HepG2 (cell line): ENCODE measurements at regions of chr2 and their contacts with region 1.

Region 1: GRCh38 chr2:88627056-88627855 is at the start of gene EIF2AK3:
- DNase-seq: peak; percentile 100
- ATAC-seq: peak; percentile 94
- H3K4me3 ChIP-seq: peak within 1 kb of the TSS; percentile 92 to 98 (median 93)
- H3K27ac ChIP-seq: peak within 1 kb of the TSS; percentile 92
- H3K4me1 ChIP-seq: peaks cover 48% of the 10 kb centered on the region
- H3K27me3 ChIP-seq: no peaks in the 10 kb centered on the region; a peak in 1 of 5 replicates
- CTCF ChIP-seq: no peak
- EP300 ChIP-seq: 0 out of 4 replicates have a peak, but pooled peaks of 1 of the 2 experiments have one; percentile 23
- POLR2A ChIP-seq: peak; percentile 79 to 97
- RAD21 ChIP-seq: peak; percentile 57
- total RNA-seq, gene EIF2AK3: 19.3 and 30.6 TPM in 2 replicates

Region 2: DNA sequence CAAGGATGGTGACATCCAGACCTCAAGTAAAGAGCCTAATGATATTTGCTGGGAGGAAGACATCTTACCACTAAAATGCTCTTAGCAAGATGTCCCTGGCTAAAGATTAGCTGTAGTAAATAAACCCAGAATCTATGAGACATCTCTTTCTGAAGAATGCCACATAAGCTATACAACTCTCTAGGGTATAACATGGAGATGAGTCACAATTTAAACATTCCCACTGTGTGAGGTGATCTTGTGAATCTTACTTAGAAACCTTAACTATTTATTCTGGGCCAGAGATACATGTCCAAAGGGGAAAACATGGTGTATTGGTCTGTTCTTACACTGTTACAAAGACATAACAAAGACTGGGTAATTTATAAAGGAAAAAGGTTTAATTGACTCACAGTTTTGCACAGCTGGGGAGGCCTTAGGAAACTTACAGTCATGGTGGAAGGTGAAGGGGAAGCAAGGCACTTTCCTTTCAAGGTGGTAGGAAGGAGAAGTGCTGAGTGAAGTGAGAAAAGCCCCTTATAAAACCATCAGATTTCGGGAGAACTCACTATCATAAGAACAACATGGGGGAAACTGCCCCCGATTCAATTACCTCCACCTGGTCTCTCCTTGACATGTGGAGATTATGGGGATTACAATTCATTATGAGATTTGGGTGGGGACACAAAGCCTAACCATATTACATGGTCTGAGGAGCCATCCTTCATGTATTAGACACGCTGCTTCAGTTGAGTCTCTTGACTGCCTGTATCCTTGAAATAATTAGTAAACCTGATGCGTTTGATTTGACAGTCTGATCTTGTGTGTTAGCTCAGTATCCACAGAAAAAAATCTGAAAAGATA is 588.8 kb before region 1 on chr2:
- CTCF ChIA-PET with region 1: no interaction called
- POLR2A ChIA-PET with region 1: no interaction called
- in situ Hi-C with region 1: no loop called
- intact Hi-C with region 1: no loop called
- DNase-seq: peak; percentile 74
- ATAC-seq: peak; percentile 83
- H3K4me3 ChIP-seq: no peak overlapping the region
- H3K27ac ChIP-seq: no peak overlapping the region
- H3K4me1 ChIP-seq: peaks cover 17% of the 10 kb centered on the region
- H3K27me3 ChIP-seq: no peaks in the 10 kb centered on the region
- CTCF ChIP-seq: no peak
- EP300 ChIP-seq: peak in 1 of 2 experiments; percentile 62; a peak in 2 of 4 replicates
- POLR2A ChIP-seq: no peak
- RAD21 ChIP-seq: no peak

Region 3: DNA sequence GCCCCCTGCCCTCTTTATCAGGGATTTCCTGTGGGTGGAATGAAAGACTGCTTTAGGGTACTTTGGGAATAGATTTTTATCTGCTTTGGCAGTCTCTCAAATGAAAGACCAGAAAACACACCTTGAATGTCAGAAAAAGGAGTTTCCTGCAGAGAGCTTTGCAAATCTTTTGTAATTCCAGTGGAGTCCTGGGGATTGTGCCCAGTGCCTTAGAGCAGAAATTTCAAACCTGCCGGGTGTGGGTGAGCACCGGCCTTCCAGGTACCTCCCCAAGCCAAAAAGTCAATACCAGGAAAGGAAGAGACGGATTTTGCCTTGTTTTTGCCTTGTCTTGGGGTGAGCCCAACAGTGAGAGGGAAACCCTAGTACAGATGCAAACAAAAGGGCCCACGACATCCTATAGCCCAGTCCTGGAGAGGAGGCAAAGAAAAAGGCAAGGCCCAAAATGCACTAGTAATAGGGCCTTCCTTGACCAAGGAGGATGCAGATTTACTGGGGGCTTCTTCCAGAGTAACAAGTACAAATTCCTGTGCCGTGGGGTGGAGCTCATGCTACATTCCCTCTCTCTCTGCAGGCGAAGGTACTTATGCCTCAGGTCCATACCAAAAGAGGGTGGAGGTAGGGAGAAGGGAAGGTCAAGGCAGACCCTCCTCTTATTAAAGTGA is 211.1 kb before region 1 on chr2:
- CTCF ChIA-PET with region 1: no interaction called
- POLR2A ChIA-PET with region 1: no interaction called
- in situ Hi-C with region 1: no loop called
- intact Hi-C with region 1: no loop called
- DNase-seq: no peak
- ATAC-seq: no peak
- H3K4me3 ChIP-seq: no peak overlapping the region
- H3K27ac ChIP-seq: no peak overlapping the region
- H3K4me1 ChIP-seq: no peaks in the 10 kb centered on the region
- H3K27me3 ChIP-seq: peaks cover 3 to 26% of the 10 kb centered on the region in 2 experiments; a peak in 3 of 5 replicates
- CTCF ChIP-seq: no peak
- EP300 ChIP-seq: no peak
- POLR2A ChIP-seq: no peak
- RAD21 ChIP-seq: no peak

Region 4: DNA sequence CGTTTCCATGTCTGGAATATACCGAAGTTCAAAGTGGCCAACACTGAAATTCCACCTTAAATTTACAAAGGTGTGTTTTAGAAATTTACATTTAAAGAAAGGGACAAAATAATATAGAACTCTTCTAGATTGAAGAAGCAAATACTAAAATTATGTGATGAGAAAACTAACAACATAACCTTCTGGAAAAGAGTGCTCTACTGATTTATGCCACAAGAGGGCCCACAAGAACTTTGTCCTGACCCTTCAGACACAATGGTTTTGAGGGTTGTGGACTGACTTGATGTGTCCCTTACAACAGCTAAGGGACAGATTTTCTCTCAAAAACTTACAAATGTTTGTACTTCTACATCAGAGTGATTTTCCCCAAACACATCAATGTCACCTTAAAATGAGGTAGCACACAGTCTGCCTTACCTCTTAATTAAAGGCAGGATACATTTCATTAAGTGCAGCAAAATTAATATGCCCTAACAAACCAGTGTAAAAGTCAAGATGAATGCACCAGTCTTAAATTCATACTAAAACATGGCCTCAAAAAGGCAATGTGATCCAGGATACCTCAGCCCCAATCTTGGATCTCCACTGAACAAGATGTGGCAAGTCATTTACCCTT is 36.1 kb before region 1 on chr2:
- CTCF ChIA-PET with region 1: no interaction called
- POLR2A ChIA-PET with region 1: interaction called, 5 read pairs
- in situ Hi-C with region 1: no loop called
- intact Hi-C with region 1: loop called (anchors 2 kb)
- DNase-seq: peak; percentile 65
- ATAC-seq: peak; percentile 96
- H3K4me3 ChIP-seq: no peak overlapping the region
- H3K27ac ChIP-seq: no peak overlapping the region
- H3K4me1 ChIP-seq: no peaks in the 10 kb centered on the region
- H3K27me3 ChIP-seq: no peaks in the 10 kb centered on the region
- CTCF ChIP-seq: peak; percentile 83
- EP300 ChIP-seq: no peak
- POLR2A ChIP-seq: no peak
- RAD21 ChIP-seq: peak; percentile 60

Region 5: DNA sequence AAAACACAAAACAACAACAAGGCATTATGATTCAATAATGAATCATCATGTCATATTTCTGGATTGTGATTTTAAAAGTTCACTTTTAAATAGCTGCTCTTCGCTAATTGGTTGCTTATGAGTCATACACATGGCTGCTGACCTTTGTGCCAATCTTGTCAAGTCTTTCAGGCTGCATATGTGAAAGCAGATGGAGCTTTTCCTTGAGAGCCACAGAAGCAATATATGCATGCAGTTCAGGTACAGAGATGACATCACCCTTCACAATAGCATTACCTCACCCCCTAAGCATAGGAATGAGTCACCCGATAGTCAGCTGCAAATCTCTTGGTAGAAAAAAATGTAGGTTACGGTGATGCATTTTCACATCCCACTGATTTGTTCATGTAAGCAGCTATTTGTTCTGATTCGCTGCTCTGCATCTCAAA is 27.2 kb before region 1 on chr2:
- CTCF ChIA-PET with region 1: no interaction called
- POLR2A ChIA-PET with region 1: interaction called, 10 read pairs
- in situ Hi-C with region 1: no loop called
- intact Hi-C with region 1: loop called (anchors 1 kb)
- DNase-seq: peak; percentile 90
- ATAC-seq: peak; percentile 94
- H3K4me3 ChIP-seq: no peak overlapping the region
- H3K27ac ChIP-seq: peak overlapping the region; percentile 3
- H3K4me1 ChIP-seq: peaks cover 19% of the 10 kb centered on the region
- H3K27me3 ChIP-seq: no peaks in the 10 kb centered on the region
- CTCF ChIP-seq: no peak
- EP300 ChIP-seq: peak in 1 of 2 experiments; percentile 20; a peak in 1 of 4 replicates
- POLR2A ChIP-seq: no peak
- RAD21 ChIP-seq: no peak

Region 6: DNA sequence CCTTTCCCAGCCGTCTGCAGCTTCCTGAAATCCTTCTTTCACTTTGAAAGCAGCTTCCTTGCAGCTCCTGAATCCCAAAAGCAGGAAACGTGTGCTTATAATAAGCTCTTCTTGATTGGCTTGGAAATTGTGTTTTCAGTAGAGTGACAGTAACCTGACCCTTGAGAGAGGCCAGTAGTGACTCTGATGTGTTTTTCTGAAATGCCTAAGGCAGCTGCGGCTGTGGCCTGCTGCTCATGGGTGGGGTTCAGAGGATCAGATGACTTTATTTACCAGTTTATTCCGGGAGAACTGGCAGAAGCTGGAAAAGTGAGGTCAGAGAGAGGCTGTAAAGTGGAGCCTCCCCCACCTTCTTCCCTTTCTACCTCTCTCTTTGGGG is 32.3 kb after region 1 on chr2:
- CTCF ChIA-PET with region 1: no interaction called
- POLR2A ChIA-PET with region 1: interaction called, 19 read pairs
- in situ Hi-C with region 1: no loop called
- intact Hi-C with region 1: loop called (anchors 1 kb)
- DNase-seq: peak; percentile 64
- ATAC-seq: peak; percentile 87
- H3K4me3 ChIP-seq: peak overlapping the region; percentile 32 to 47 (median 44)
- H3K27ac ChIP-seq: no peak overlapping the region
- H3K4me1 ChIP-seq: peaks cover 36% of the 10 kb centered on the region
- H3K27me3 ChIP-seq: no peaks in the 10 kb centered on the region
- CTCF ChIP-seq: no peak
- EP300 ChIP-seq: no peak
- POLR2A ChIP-seq: no peak
- RAD21 ChIP-seq: no peak

Region 7: DNA sequence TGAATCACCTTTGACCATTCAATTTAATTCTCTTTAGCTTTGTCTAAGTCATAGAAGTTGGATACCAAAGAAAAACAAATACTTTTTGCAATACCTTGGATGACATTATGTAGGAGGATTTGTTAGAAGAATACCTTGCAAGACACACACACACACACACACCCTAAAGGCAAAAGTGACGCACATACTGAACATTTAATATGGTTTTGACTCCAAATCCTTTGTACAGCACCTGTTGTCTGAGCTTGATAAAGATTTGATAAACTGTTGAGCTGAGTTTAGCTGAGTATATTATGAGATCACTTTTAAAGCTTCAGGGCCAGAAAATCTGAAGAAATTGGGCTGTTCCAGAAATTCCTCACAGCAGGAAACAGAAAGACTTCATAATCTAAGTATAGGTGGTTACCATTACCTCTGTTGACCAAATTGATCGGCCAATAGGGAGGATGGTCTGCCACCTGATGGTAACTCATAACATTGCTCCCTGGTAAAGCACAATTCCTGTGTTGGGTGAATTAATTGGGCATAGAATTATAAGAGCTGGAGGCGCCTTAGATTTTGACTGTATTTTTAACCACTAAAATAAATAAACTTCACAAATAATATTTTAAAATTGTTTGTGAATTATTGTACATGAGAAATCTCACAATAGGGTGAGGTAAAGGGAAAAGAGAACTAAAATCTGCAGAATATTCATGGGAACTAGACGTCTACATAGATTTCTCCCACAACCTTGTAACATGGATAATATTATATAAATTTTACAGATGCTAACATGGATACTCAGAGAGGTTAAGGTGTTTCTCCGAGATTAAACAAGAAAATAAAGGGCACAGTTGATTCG is 42.3 kb after region 1 on chr2:
- CTCF ChIA-PET with region 1: no interaction called
- POLR2A ChIA-PET with region 1: interaction called, 10 read pairs
- in situ Hi-C with region 1: no loop called
- intact Hi-C with region 1: loop called (anchors 1 kb)
- DNase-seq: peak; percentile 58
- ATAC-seq: peak; percentile 84
- H3K4me3 ChIP-seq: no peak overlapping the region
- H3K27ac ChIP-seq: no peak overlapping the region
- H3K4me1 ChIP-seq: peaks cover 13% of the 10 kb centered on the region
- H3K27me3 ChIP-seq: no peaks in the 10 kb centered on the region
- CTCF ChIP-seq: peak; percentile 80
- EP300 ChIP-seq: no peak
- POLR2A ChIP-seq: no peak
- RAD21 ChIP-seq: peak; percentile 59; the same call in 1 of the 2 replicates

Region 8: DNA sequence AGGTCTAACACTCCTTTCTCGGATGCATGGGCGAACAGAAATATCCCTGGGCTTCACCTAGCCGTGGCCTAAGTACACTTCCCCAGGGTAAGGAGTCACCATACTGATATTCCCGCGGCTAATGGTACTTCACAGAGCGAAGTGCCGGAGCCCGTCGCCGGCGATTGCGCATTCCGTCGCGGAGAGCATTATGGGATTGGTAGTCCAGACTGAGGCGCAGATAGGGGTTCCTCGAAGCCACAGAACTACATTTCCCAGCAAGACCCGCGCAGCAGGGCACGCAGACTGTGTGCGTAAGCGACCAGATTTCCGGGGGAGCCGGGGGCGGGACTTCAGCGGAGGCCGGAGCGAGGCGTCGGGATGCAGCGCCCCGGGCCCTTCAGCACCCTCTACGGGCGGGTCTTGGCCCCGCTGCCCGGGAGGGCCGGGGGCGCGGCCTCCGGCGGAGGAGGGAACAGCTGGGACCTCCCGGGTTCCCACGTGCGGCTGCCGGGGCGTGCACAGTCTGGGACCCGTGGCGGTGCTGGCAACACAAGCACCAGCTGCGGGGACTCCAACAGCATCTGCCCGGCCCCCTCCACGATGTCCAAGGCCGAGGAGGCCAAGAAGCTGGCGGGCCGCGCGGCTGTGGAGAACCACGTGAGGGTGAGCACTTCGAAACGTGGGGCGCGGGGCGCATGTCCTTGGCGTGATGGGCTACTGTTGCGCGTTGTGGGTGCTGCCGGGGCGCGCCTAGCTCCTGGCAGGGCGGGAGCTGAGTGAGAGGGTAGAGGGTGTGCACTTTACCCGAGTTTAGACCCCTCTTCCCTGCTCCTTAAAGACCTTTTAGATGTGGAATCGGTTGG is 64.3 kb after region 1 on chr2 and contains the start of gene RPIA:
- CTCF ChIA-PET with region 1: no interaction called
- POLR2A ChIA-PET with region 1: interaction called, 6 read pairs
- in situ Hi-C with region 1: no loop called
- intact Hi-C with region 1: loop called (anchors 2 kb)
- DNase-seq: peak; percentile 99
- ATAC-seq: peak; percentile 96
- H3K4me3 ChIP-seq: peak within 1 kb of the TSS; percentile 87 to 89 (median 88)
- H3K27ac ChIP-seq: peak within 1 kb of the TSS; percentile 82
- H3K4me1 ChIP-seq: peaks cover 50% of the 10 kb centered on the region
- H3K27me3 ChIP-seq: no peaks in the 10 kb centered on the region; a peak in 1 of 5 replicates
- CTCF ChIP-seq: peak; percentile 83
- EP300 ChIP-seq: peak; percentile 29 to 75; a peak in 3 of 4 replicates
- POLR2A ChIP-seq: peak; percentile 81 to 97
- RAD21 ChIP-seq: peak; percentile 88
- total RNA-seq, gene RPIA: 23.9 and 31.6 TPM in 2 replicates

Region 9: DNA sequence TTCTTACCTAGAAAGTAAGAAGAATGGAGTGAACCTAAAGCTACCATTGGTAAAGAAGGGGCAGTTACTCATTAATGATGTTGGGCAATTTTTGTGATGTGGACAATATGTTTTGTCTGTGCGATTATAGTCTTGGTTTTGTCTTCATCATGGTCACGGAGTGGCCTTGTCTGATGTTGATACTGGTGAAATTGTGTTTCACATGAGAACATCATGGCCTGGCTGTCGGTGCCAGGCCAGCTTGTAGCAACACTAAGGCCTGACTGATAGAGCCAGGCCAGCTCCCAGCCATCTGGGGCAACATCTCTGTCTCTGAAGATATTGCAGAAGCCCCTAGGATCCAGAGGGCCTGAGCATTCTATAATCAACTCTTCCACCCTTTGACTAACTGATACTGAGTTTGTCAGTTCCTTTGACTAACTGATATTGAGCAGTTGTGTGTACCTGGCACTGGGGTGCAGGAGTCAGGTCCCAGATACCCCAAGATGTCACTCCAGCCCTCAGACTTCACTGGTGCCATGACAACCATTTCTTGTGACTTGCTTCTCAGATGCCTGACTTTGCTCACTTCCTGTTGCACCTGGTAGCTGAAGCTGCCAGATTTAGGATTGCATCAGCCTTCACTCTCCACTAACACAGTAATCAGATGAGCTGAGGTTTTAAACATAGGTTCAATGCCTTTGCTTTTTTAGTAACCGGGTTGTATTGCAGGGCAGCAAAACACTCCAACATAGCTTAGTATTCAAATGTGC is 126.8 kb after region 1 on chr2:
- CTCF ChIA-PET with region 1: no interaction called
- POLR2A ChIA-PET with region 1: no interaction called
- in situ Hi-C with region 1: no loop called
- intact Hi-C with region 1: no loop called
- DNase-seq: no peak
- ATAC-seq: no peak
- H3K4me3 ChIP-seq: no peak overlapping the region
- H3K27ac ChIP-seq: no peak overlapping the region
- H3K4me1 ChIP-seq: no peaks in the 10 kb centered on the region
- H3K27me3 ChIP-seq: no peaks in the 10 kb centered on the region
- CTCF ChIP-seq: no peak
- EP300 ChIP-seq: no peak
- POLR2A ChIP-seq: no peak
- RAD21 ChIP-seq: no peak